ENCODE measurements at regions of chr7 and their contacts with region 1.

Region 1: GRCh38 chr7:117385340-117386109 is 41.8 kb downstream of the ASZ1 start:
- DNase-seq: no peak
- ATAC-seq: no peak
- H3K4me3 Mint-ChIP-seq: no peak overlapping the region
- H3K27ac Mint-ChIP-seq: no peak overlapping the region
- H3K4me1 Mint-ChIP-seq: no peaks in the 10 kb centered on the region
- H3K27me3 Mint-ChIP-seq: no peaks in the 10 kb centered on the region

Region 2: GRCh38 chr7:117061751-117062150 is 323.8 kb before region 1 on chr7:
- CTCF ChIA-PET with region 1: no interaction called
- POLR2A ChIA-PET with region 1: no interaction called
- intact Hi-C with region 1: no loop called
- DNase-seq: no peak
- ATAC-seq: no peak
- H3K4me3 Mint-ChIP-seq: no peak overlapping the region
- H3K27ac Mint-ChIP-seq: no peak overlapping the region
- H3K4me1 Mint-ChIP-seq: peaks cover 2% of the 10 kb centered on the region
- H3K27me3 Mint-ChIP-seq: no peaks in the 10 kb centered on the region

Region 3: GRCh38 chr7:117212969-117213877 is 172.3 kb before region 1 on chr7:
- CTCF ChIA-PET with region 1: no interaction called
- POLR2A ChIA-PET with region 1: no interaction called
- intact Hi-C with region 1: loop called (anchors 1 to 2 kb)
- DNase-seq: peak; percentile 68
- ATAC-seq: peak; percentile 64
- H3K4me3 Mint-ChIP-seq: no peak overlapping the region
- H3K27ac Mint-ChIP-seq: no peak overlapping the region
- H3K4me1 Mint-ChIP-seq: no peaks in the 10 kb centered on the region
- H3K27me3 Mint-ChIP-seq: no peaks in the 10 kb centered on the region

Region 4: DNA sequence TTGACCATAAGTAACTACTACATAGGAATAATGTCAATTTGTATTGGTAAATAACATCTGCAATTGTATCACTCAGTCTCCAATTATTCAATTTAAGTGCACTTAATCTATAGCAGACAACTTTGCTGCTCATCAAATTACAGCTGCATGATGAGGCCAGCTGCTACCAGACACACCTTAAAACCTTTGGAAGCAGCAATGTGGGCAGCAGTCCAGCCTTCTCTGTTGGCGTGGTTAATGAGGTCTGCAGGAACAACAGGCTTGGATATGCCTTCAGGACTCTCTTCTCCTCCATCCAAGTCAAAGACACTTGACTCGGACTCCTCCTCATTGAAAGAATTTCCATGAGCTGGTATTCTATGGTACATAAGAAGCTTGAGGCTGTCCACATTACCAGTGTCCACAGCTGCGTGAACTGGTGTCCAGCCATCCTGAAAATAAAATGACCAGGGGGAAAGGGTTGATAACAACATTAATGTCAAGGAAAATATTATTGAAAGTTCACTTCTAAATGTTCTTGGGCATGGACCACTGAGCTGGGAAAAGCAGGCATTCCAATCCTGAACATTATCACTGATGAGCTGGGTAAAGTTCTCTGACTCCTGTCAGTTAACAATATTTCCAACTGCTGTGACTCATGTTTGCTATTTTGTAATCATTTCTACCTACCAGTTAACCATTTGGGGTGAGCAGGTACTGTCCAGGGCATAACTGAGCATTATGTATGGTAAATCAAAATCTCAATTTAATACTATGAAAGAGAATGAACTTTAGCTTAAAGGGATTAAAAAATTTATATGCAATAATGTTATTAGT is 392.0 kb after region 1 on chr7:
- CTCF ChIA-PET with region 1: no interaction called
- POLR2A ChIA-PET with region 1: no interaction called
- intact Hi-C with region 1: no loop called
- DNase-seq: no peak
- ATAC-seq: no peak
- H3K4me3 Mint-ChIP-seq: no peak overlapping the region
- H3K27ac Mint-ChIP-seq: no peak overlapping the region
- H3K4me1 Mint-ChIP-seq: peaks cover 2% of the 10 kb centered on the region
- H3K27me3 Mint-ChIP-seq: peaks cover 7% of the 10 kb centered on the region

Measured in activated CD4-positive, alpha-beta T cell treated with anti-CD3 and anti-CD28 coated beads for 36 hours (primary cell).